ENCODE measurements at regions of chr5 and their contacts with region 1.

Region 1: DNA sequence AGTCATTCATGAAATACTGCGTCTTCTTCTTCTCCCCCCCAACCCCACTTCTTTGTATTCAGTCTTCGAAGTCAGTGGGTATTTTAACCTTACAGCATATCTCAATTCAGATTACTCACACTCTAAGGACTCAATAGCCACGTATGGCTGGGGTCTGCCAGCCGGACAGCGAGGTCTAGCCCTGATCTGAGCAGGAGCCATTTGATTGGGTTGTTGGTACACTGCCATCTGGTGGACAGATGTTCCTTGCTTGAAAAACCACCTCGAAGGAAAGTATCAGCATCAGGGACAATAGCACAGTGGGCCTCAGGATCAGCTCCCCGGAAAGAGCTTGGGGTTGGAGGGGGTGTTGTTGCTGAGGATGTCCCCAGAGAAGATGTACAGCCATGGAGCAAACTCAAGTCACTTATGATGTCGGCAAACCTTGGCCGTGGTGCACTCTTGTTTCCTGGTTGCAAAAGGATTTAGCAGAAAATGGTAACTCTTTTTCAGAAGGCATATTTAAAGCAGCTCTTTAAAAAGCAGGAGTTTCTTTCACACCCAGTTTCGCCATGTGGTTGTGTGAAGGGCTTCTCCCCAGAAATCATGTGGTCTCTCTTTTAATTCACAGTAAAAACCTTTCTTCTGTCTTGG is 31.7 kb upstream of the KCNMB1 start:
- DNase-seq: peak in 1 of 2 donors; percentile 22
- ATAC-seq: peak in 2 of 4 donors; percentile 41 to 67
- H3K4me3 ChIP-seq: no peak overlapping the region
- H3K27ac ChIP-seq: no peak overlapping the region
- H3K4me1 ChIP-seq: no peaks in the 10 kb centered on the region
- H3K27me3 ChIP-seq: no peaks in the 10 kb centered on the region
- CTCF ChIP-seq: peak; percentile 60

Region 2: DNA sequence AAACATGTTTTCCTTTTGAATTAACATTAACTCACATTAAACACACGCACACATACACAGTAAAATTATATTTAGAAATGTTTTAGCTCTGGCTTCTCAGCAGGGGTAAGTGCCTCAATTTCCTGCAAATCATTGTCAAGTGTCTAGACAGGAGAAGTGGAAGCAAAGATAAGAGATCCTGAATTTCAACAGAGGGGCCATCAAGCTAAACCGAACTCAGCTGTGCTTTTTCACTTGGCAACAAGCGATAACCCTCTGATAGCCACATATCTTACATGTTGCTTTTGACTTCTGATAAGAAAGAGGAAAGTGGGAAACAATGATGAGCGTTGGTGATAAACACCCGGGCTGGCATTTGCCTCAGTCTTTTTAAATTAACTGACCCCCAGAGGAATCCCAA is 917.0 kb before region 1 on chr5:
- intact Hi-C with region 1: no loop called
- DNase-seq: no peak
- ATAC-seq: no peak
- H3K4me3 ChIP-seq: no peak overlapping the region
- H3K27ac ChIP-seq: no peak overlapping the region
- H3K4me1 ChIP-seq: no peaks in the 10 kb centered on the region
- H3K27me3 ChIP-seq: no peaks in the 10 kb centered on the region
- CTCF ChIP-seq: no peak

Region 3: GRCh38 chr5:170111088-170111785 is 309.7 kb before region 1 on chr5:
- intact Hi-C with region 1: loop called in 1 of 2 experiments (anchors 5 kb)
- DNase-seq: no peak
- ATAC-seq: no peak
- H3K4me3 ChIP-seq: no peak overlapping the region
- H3K27ac ChIP-seq: no peak overlapping the region
- H3K4me1 ChIP-seq: no peaks in the 10 kb centered on the region
- H3K27me3 ChIP-seq: no peaks in the 10 kb centered on the region
- CTCF ChIP-seq: no peak

Region 4: GRCh38 chr5:170225326-170226128 is 195.4 kb before region 1 on chr5:
- intact Hi-C with region 1: loop called in 1 of 2 experiments (anchors 2 kb)
- DNase-seq: peak; percentile 57 to 78
- ATAC-seq: peak in 3 of 4 donors; percentile 38 to 74 (median 58)
- H3K4me3 ChIP-seq: no peak overlapping the region
- H3K27ac ChIP-seq: no peak overlapping the region
- H3K4me1 ChIP-seq: no peaks in the 10 kb centered on the region
- H3K27me3 ChIP-seq: no peaks in the 10 kb centered on the region
- CTCF ChIP-seq: peak; percentile 59

Region 5: DNA sequence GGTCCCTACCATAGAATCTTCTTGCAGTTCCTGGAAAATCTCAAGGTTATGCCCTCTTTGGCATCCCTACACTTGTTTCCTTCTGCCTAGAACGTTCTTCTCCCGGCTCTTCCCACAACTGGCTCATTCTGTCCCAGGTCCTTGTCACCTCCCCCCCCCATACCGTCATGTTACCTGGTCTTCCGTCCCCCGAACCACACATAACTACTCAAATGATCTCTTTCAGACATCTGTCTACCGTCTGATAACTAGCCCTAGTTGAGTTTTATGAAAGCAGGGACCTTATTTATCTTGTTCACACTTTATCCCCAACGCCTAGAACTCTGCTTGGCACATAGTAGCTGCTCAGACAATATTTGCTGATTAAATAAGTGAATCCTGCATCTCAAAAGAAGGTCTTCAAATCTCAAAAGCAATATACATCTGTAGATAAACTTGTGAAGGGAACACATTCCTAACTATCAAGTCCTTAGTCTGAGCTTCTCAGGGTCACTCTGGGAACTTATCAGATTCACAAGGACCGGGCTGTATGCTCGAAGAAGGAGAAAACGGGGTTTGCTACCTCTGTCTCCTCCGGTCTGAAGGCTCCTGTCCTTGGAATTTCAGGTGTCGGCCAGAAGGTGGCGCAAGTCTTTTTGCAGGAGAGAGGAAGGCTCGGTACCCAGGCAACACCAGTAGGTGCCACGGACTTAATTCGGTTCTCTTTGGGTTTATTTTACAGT is 153.3 kb before region 1 on chr5:
- intact Hi-C with region 1: loop called (anchors 5 kb)
- DNase-seq: peak; percentile 68 to 81
- ATAC-seq: peak in 3 of 4 donors; percentile 44 to 78 (median 48)
- H3K4me3 ChIP-seq: no peak overlapping the region
- H3K27ac ChIP-seq: no peak overlapping the region
- H3K4me1 ChIP-seq: no peaks in the 10 kb centered on the region
- H3K27me3 ChIP-seq: peaks cover 0 to 4% (median 0%) of the 10 kb centered on the region in 3 donors
- CTCF ChIP-seq: peak; percentile 67

Region 6: DNA sequence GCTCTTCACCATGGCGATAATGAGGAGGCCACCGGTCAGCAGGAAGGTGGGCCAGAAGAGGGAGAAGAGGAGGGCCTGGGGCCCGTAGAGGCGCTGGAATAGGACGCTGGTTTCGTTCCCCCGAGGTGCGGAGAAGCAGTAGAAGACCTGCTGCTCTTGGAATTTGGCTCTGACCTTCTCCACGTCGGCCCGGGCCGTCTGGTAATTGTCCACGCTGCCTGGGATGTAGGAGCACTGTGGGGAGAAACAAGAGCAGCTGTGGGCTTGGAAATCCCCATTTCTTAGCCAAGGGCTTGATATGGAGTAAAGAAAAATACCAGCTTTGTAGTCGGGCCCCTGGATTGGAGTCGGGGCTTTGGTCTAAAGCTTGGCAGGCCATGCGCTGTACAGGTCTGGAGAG is 42.2 kb before region 1 on chr5:
- intact Hi-C with region 1: no loop called
- DNase-seq: no peak
- ATAC-seq: no peak
- H3K4me3 ChIP-seq: no peak overlapping the region
- H3K27ac ChIP-seq: no peak overlapping the region
- H3K4me1 ChIP-seq: no peaks in the 10 kb centered on the region
- H3K27me3 ChIP-seq: no peaks in the 10 kb centered on the region
- CTCF ChIP-seq: no peak

Region 7: GRCh38 chr5:170388818-170389549 is 31.9 kb before region 1 on chr5 and contains the start of gene KCNMB1:
- intact Hi-C with region 1: no loop called
- DNase-seq: no peak
- ATAC-seq: no peak
- H3K4me3 ChIP-seq: peak within 1 kb of the TSS; percentile 38
- H3K27ac ChIP-seq: no peak within 1 kb of the TSS
- H3K4me1 ChIP-seq: no peaks in the 10 kb centered on the region
- H3K27me3 ChIP-seq: no peaks in the 10 kb centered on the region
- CTCF ChIP-seq: no peak
- total RNA-seq, gene KCNMB1: 0.12 to 0.38 (median 0.24) TPM